Posterior vena cava (tissue), 2 donors: ENCODE measurements at regions of chr9 and their contacts with region 1.

Region 1: GRCh38 chr9:122619996-122620395 is 5.5 kb downstream of the OR1Q1 start:
- DNase-seq: no peak

Region 2: DNA sequence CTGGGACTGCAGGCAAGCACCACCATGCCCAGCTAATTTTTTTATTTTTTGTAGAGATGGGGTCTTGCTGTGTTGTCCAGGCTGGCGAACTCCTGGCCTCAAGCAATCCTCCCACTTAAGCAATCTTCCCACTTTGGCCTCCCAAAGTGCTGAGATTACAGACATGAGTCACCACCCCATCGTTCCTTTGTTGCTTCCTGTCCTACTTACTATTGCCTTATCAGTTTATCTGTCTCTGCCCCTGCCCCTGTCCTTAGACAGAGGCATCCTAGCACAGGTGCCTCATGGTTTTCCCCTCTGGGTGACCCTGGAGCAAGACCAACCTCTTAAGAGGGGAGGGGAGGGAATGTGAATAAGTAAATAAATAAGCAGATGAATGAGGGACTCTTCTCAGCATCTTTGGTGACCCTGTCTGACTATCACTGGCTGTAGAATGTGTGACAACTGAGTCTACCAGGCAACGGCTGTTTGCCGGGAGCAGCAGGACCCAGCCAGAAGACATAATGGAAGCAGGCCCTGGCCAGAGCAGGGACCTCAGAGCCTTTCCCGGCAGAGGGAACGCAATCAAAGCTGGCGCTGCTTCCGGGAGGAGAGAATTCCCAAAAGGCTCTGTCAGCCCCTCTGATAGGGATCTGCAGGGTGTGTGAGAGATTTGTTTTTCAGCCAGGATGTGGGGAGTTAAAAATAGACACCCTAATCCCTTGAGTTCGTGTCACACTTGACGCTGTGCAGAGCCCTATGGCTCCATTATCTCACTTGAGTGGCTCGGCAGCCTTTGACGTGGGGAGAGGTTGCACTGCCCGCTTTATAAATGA is 1012.4 kb before region 1 on chr9:
- intact Hi-C with region 1: no loop called
- DNase-seq: no peak

Region 3: GRCh38 chr9:122518226-122518625 is 101.8 kb before region 1 on chr9:
- intact Hi-C with region 1: no loop called
- DNase-seq: no peak

Region 4: GRCh38 chr9:123299558-123300126 is 679.6 kb after region 1 on chr9:
- intact Hi-C with region 1: loop called in 1 of 2 experiments (anchors 5 kb)
- DNase-seq: no peak